Endothelial cell of umbilical vein (primary cell): ENCODE measurements at regions of chr21 and their contacts with region 1.

Region 1: GRCh38 chr21:44742418-44743153 is 31.2 kb upstream of the TSPEAR start:
- DNase-seq: peak; percentile 13
- H3K4me3 ChIP-seq: no peak overlapping the region
- H3K27ac ChIP-seq: no peak overlapping the region
- H3K4me1 ChIP-seq: no peaks in the 10 kb centered on the region
- H3K27me3 ChIP-seq: peaks cover 13 to 17% of the 10 kb centered on the region in 2 experiments
- CTCF ChIP-seq: peak in 1 of 2 donors; percentile 10
- POLR2A ChIP-seq: no peak

Region 2: GRCh38 chr21:43703035-43703880 is 1039.3 kb before region 1 on chr21:
- CTCF ChIA-PET with region 1: no interaction called
- POLR2A ChIA-PET with region 1: no interaction called
- dilution Hi-C with region 1: no loop called
- intact Hi-C with region 1: no loop called
- DNase-seq: no peak
- H3K4me3 ChIP-seq: no peak overlapping the region
- H3K27ac ChIP-seq: no peak overlapping the region
- H3K4me1 ChIP-seq: no peaks in the 10 kb centered on the region
- H3K27me3 ChIP-seq: peaks cover 0 to 1% of the 10 kb centered on the region in 2 experiments
- CTCF ChIP-seq: no peak
- POLR2A ChIP-seq: no peak

Region 3: DNA sequence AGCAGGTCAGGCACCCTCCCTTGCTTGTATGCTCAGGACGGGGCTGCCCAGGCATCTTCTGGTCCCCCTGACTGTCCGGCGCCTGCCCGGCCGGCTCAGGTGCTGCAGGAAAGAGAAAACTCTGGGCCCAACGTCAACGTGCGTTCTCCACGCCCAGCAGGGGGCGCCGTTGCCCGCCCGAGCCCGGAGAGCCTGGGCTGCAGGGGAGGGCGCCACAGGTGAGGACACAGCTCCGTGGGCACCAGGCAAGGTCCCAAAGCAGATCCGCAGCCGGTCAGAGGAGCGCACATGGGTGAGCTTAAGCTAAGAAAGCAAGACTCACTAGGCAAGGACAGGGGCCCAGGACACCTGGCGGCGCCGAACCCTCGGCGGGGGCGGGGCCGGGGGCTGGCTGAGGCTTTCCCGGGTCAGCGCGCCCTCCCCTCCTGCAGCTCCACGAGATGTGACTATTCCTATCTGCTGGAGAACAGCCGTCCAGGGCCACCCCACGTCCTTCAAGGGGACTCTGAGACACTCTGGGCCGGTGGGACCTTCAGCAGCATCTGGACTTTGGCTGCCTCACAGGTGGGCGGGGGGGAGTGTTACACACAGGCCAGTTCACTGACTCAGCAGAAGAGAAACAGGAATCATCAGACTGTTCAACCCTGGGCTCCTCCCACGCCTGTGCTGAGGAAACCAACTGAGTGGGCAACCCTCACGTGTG is 231.9 kb before region 1 on chr21:
- CTCF ChIA-PET with region 1: interaction called, 18 read pairs
- POLR2A ChIA-PET with region 1: no interaction called
- dilution Hi-C with region 1: no loop called
- intact Hi-C with region 1: no loop called
- DNase-seq: peak; percentile 33
- H3K4me3 ChIP-seq: no peak overlapping the region
- H3K27ac ChIP-seq: no peak overlapping the region
- H3K4me1 ChIP-seq: no peaks in the 10 kb centered on the region
- H3K27me3 ChIP-seq: no peaks in the 10 kb centered on the region
- CTCF ChIP-seq: peak; percentile 82 to 90
- POLR2A ChIP-seq: no peak

Region 4: GRCh38 chr21:44618504-44618903 is 124.1 kb before region 1 on chr21:
- CTCF ChIA-PET with region 1: interaction called, 20 read pairs
- POLR2A ChIA-PET with region 1: no interaction called
- dilution Hi-C with region 1: no loop called
- intact Hi-C with region 1: no loop called
- DNase-seq: peak; percentile 7
- H3K4me3 ChIP-seq: no peak overlapping the region
- H3K27ac ChIP-seq: no peak overlapping the region
- H3K4me1 ChIP-seq: no peaks in the 10 kb centered on the region
- H3K27me3 ChIP-seq: no peaks in the 10 kb centered on the region
- CTCF ChIP-seq: peak in 1 of 2 donors; percentile 27
- POLR2A ChIP-seq: no peak

Region 5: DNA sequence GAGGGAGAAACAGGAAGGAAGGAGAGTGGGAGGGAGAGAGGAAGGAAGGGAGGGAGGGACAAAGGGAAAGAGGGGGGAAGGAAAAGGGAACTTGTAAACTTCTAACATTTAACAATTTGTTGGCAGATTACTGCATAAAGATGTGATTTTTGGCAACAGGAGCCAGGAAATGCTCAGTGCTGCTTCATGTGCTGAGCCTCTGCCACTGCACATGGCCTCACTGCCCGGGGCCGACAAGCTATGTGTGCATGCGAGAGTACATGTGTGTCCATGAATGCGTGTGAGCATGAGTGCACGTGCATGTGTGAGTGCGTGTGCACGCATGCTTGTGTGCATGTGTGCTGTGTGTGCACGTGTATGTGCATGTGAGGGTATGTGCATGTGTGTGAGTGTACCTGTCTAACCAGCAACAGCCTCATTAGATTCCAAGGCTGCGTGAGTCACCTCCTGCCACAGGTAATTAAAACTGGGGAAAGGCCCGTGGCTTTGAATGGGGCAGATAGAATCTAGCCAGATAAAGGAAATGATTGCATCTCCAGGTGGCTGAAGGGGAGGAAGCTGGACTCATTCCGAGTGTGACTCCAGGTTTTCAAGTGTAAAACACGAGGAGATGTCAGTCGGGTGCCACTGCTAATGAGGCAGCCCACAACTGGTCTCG is 10.2 kb after region 1 on chr21:
- CTCF ChIA-PET with region 1: interaction called, 10 read pairs
- POLR2A ChIA-PET with region 1: no interaction called
- dilution Hi-C with region 1: no loop called
- intact Hi-C with region 1: no loop called
- DNase-seq: peak; percentile 27
- H3K4me3 ChIP-seq: no peak overlapping the region
- H3K27ac ChIP-seq: no peak overlapping the region
- H3K4me1 ChIP-seq: peaks cover 42% of the 10 kb centered on the region
- H3K27me3 ChIP-seq: peaks cover 3 to 4% of the 10 kb centered on the region in 2 experiments
- CTCF ChIP-seq: peak; percentile 18 to 21
- POLR2A ChIP-seq: no peak

Region 6: GRCh38 chr21:44927587-44928461 is 185.2 kb after region 1 on chr21:
- CTCF ChIA-PET with region 1: no interaction called
- POLR2A ChIA-PET with region 1: no interaction called
- dilution Hi-C with region 1: no loop called
- intact Hi-C with region 1: no loop called
- DNase-seq: no peak
- H3K4me3 ChIP-seq: no peak overlapping the region
- H3K27ac ChIP-seq: no peak overlapping the region
- H3K4me1 ChIP-seq: peaks cover 31% of the 10 kb centered on the region
- H3K27me3 ChIP-seq: peaks cover 7 to 16% of the 10 kb centered on the region in 2 experiments
- CTCF ChIP-seq: no peak
- POLR2A ChIP-seq: no peak